Sigmoid colon (tissue), 7 donors: ENCODE measurements at regions of chr19 and their contacts with region 1.

Region 1: DNA sequence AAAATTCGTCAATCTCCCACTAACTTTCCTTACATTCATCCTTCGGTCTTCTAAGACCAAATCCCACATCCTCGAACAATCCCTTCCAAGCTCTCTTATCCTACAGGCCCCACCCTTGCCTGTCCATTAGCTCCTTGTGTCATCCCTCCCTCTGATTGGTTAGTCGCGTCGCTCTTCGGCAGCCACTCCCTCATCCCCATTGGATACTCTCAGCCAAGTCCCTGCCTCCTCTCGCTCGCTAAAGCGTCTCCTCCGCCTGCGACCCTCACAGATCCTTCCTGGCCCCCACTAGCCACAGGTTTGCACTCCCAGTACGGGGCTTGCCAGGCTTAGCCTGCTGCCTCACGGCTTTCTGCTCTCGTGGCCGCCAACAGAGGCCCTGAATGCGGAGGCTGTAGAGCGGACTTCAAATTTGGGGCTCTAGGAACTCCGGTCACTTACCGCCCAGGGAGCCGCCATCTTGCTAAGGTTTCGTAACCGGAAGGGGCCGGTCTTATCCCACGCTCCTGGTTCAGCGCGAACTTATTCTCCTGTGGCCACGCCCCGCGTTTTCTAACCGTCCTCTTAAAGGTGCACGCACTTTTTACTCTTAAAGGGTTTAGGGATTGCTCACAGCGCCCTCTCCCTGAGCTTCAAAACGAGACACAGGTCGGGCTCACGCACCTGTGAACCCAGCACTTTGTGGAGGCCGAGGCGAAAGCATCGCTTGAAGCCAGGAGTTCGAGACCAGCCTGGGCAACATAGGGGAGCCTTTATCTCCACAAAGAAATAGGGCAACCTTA is at the start of gene DMAC2:
- DNase-seq: peak; percentile 99
- H3K4me3 ChIP-seq: peak within 1 kb of the TSS; percentile 64 to 78 (median 74)
- H3K27ac ChIP-seq: peak within 1 kb of the TSS; percentile 89 to 98 (median 94)
- H3K4me1 ChIP-seq: peaks cover 0 to 18% (median 11%) of the 10 kb centered on the region in 4 donors
- H3K27me3 ChIP-seq: peaks cover 0 to 19% (median 0%) of the 10 kb centered on the region in 3 donors
- CTCF ChIP-seq: peak in 2 of 4 experiments; percentile 19 to 39
- EP300 ChIP-seq: no peak
- POLR2A ChIP-seq: peak; percentile 74 to 78
- total RNA-seq, gene DMAC2: 33.9 to 46.3 (median 41.0) TPM

Region 2: GRCh38 chr19:41397086-41398049 is 42.3 kb before region 1 on chr19 and contains the starts of genes BCKDHA and EXOSC5:
- intact Hi-C with region 1: loop called (anchors 1 kb)
- DNase-seq: peak; percentile 100
- H3K4me3 ChIP-seq: peak within 1 kb of the TSS; percentile 82 to 93 (median 87)
- H3K27ac ChIP-seq: peak within 1 kb of the TSS; percentile 85 to 89 (median 86)
- H3K4me1 ChIP-seq: peaks cover 0 to 31% (median 26%) of the 10 kb centered on the region in 4 donors
- H3K27me3 ChIP-seq: no peaks in the 10 kb centered on the region
- CTCF ChIP-seq: no peak
- EP300 ChIP-seq: peak in 1 of 4 donors; percentile 25
- POLR2A ChIP-seq: peak; percentile 29 to 57
- total RNA-seq, gene BCKDHA: 29.6 to 35.7 (median 33.6) TPM
- total RNA-seq, gene EXOSC5: 6.6 to 21.4 (median 14.4) TPM

Region 3: GRCh38 chr19:41646589-41647204 is 207.1 kb after region 1 on chr19:
- intact Hi-C with region 1: no loop called
- DNase-seq: no peak
- H3K4me3 ChIP-seq: no peak overlapping the region
- H3K27ac ChIP-seq: no peak overlapping the region
- H3K4me1 ChIP-seq: no peaks in the 10 kb centered on the region
- H3K27me3 ChIP-seq: peaks cover 0 to 7% (median 0%) of the 10 kb centered on the region in 3 donors
- CTCF ChIP-seq: no peak
- EP300 ChIP-seq: no peak
- POLR2A ChIP-seq: no peak